Dendritic cell treated with granulocyte-macrophage colony-stimulating factor and Interleukin-4, amounts not matched to agents 40 ng/mL and 50 ng/mL, for 4 days (primary cell): ENCODE measurements at regions of chr7 and their contacts with region 1.

Region 1: DNA sequence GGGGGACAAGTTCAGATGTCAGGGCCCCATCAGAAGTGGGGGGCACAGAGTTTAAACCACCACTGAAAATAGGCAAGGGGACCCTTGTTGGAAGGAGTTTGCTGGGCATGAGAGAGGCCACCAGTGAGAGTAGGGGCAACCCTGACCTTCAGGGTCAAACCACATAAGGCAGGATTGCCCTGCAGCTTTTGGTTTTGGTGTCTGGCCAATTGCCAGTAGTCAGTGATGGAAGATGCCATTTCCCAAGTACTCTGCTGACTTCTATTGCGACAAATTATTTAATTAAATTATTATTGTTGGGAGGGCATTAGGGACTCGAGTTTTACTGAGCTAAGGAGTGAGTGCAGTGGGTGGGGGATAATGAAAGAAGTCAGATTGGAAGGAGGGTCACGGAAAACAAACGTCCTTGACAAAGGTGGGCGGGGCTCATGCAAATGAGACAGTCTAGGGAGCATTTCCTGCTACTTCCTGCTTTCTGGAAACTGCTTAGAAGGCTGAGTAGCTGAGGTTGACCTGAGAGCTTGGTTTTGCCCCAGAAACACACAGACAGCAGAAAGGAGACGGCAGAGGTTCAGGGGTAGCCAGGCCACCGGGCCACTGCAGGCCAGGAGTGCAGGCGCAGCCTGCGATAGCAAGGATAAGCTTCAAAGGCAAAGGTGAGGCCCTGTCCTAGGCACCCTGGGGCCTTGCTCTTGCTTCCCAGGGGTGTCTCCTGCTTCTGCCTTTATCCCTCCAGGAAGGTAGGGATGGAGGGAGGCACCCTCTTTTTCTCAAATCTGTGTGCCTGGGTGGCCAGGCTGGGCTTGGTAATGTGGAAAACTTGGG is 74.1 kb upstream of the ANLN start:
- H3K4me3 Mint-ChIP-seq: no peak overlapping the region
- H3K27ac Mint-ChIP-seq: no peak overlapping the region
- H3K4me1 Mint-ChIP-seq: peaks cover 9% of the 10 kb centered on the region
- H3K27me3 Mint-ChIP-seq: peaks cover 1% of the 10 kb centered on the region

Region 2: GRCh38 chr7:35286422-35286821 is 1029.1 kb before region 1 on chr7:
- intact Hi-C with region 1: no loop called
- H3K4me3 Mint-ChIP-seq: no peak overlapping the region
- H3K27ac Mint-ChIP-seq: no peak overlapping the region
- H3K4me1 Mint-ChIP-seq: no peaks in the 10 kb centered on the region
- H3K27me3 Mint-ChIP-seq: peaks cover 2% of the 10 kb centered on the region

Region 3: DNA sequence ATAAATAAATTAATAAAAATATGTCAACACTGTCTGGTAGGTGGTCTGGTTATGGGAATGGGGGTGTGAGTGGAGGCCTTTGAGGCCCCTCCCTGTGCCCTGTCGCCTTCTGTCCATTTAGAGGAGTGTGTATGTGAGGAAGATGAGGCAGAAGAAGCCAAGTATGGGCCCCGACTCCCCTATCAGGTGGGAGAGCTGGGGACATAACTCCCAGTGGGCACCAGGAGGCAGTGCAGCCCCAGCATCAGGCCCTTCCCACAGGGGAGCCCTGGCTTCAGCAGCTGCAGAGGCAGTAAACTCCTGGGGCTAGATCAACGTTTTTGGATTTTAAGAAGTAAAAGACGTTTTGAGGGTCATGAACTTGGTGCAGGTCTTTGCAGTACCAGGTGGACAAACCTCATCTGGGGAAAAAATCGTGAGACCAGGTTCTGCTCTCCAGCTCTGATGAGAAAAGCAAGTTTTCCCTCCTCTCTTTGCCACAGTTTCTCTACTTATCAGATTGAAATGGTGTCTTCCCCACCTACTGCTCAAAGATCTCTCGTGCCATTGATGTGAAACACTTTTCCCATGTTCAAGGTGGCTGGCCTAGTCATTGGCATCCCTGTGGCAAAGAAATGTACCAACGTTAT is 330.3 kb before region 1 on chr7:
- intact Hi-C with region 1: loop called (anchors 1 kb)
- H3K4me3 Mint-ChIP-seq: no peak overlapping the region
- H3K27ac Mint-ChIP-seq: no peak overlapping the region
- H3K4me1 Mint-ChIP-seq: peaks cover 6% of the 10 kb centered on the region
- H3K27me3 Mint-ChIP-seq: no peaks in the 10 kb centered on the region

Region 4: DNA sequence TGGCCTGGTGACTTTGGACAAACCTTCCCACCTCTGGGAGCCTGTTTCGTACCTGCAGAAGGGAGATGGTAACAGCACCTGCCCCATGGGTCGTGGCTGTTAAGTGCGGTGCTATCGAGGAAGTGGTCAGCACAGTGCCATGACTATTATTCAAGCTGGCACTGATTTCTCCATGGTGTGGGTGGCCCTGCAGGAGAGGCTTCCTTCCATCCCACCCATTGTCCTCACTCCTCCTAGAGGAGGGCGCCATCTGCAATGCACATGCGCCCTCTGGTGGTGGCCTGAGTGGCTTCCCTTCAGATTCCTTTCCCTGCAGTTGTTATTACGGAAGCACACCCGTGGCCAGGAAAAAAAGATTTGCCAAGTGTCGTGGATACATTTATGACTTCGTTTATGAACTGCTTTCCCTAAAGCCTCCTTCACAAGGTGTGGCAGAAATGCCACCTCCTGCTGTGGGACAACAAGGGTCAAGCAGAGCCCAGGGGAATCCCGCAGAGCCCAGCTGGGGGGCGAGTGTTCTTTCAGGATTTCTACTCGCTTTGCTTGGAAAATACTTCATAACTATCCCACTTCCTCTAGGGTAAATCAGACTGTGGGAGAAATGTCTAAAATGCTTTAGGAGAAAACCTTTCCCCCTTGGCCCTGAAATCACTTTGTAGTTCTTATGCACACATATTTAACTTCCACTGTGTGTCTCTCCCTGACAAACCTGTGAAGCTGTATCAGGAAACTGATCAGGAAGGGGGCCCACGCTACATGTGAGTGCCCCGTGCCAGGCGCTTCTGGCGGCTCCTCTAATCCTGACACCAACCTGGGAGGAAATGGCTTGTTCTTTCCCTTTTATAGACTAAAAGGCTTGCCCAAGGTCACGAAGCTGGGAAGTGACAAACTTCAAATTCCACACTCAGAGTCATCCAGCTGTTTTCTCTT is 23.9 kb before region 1 on chr7:
- intact Hi-C with region 1: no loop called
- H3K4me3 Mint-ChIP-seq: peak overlapping the region; percentile 57
- H3K27ac Mint-ChIP-seq: peak overlapping the region; percentile 59
- H3K4me1 Mint-ChIP-seq: peaks cover 52% of the 10 kb centered on the region
- H3K27me3 Mint-ChIP-seq: peaks cover 1% of the 10 kb centered on the region

Region 5: GRCh38 chr7:36535866-36536664 is 220.5 kb after region 1 on chr7:
- intact Hi-C with region 1: no loop called
- H3K4me3 Mint-ChIP-seq: no peak overlapping the region
- H3K27ac Mint-ChIP-seq: peak overlapping the region; percentile 31
- H3K4me1 Mint-ChIP-seq: no peaks in the 10 kb centered on the region
- H3K27me3 Mint-ChIP-seq: no peaks in the 10 kb centered on the region